WTC11 (cell line): ENCODE measurements at regions of chr1 and their contacts with region 1.

Region 1: GRCh38 chr1:62281922-62282555 is 37.2 kb downstream of the KANK4 start:
- DNase-seq: no peak
- ATAC-seq: no peak
- H3K4me3 Mint-ChIP-seq: no peak overlapping the region
- H3K27ac Mint-ChIP-seq: no peak overlapping the region
- H3K4me1 Mint-ChIP-seq: peaks cover 67% of the 10 kb centered on the region
- H3K27me3 Mint-ChIP-seq: peaks cover 94% of the 10 kb centered on the region
- CTCF ChIP-seq: no peak

Region 2: DNA sequence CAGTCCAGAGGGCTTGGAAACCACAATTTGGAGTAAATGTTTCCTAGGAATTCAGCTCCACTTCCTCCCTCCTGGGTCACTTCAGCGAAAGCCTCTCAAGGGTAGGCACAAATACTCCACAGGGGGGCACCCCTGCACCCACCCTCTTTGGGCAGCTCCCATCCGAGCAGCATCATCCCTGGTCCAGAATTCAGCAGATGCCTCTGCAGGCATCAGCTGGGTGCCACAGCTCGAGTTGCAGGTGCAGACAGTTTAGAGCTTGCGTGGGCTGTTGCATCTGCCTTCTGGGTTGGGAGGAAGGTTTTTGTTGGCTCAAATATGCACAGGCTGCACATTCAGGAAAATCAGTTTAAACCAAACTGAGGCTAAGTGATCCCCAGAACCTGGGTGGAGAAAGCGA is 12.2 kb after region 1 on chr1:
- CTCF ChIA-PET with region 1: interaction called, 10 read pairs
- POLR2A ChIA-PET with region 1: interaction called, 3 read pairs
- DNase-seq: peak; percentile 61
- ATAC-seq: peak; percentile 86
- H3K4me3 Mint-ChIP-seq: no peak overlapping the region
- H3K27ac Mint-ChIP-seq: no peak overlapping the region
- H3K4me1 Mint-ChIP-seq: peaks cover 23% of the 10 kb centered on the region
- H3K27me3 Mint-ChIP-seq: peaks cover 60% of the 10 kb centered on the region
- CTCF ChIP-seq: no peak